MCF 10A (cell line): ENCODE measurements at regions of chr5 and their contacts with region 1.

Region 1: GRCh38 chr5:66864331-66864840 is 268.2 kb downstream of the MAST4 start:
- DNase-seq: peak; percentile 55
- H3K4me3 Mint-ChIP-seq: no peak overlapping the region
- H3K27ac Mint-ChIP-seq: no peak overlapping the region
- H3K4me1 Mint-ChIP-seq: peaks cover 5% of the 10 kb centered on the region
- H3K27me3 Mint-ChIP-seq: no peaks in the 10 kb centered on the region
- CTCF ChIP-seq: peak; percentile 33

Region 2: GRCh38 chr5:66807743-66808142 is 56.6 kb before region 1 on chr5:
- CTCF ChIA-PET with region 1: interaction called, 47 read pairs
- POLR2A ChIA-PET with region 1: no interaction called
- intact Hi-C with region 1: loop called (anchors 2 kb)
- DNase-seq: peak; percentile 84
- H3K4me3 Mint-ChIP-seq: no peak overlapping the region
- H3K27ac Mint-ChIP-seq: no peak overlapping the region
- H3K4me1 Mint-ChIP-seq: peaks cover 8% of the 10 kb centered on the region
- H3K27me3 Mint-ChIP-seq: peaks cover 42% of the 10 kb centered on the region
- CTCF ChIP-seq: peak; percentile 56

Region 3: DNA sequence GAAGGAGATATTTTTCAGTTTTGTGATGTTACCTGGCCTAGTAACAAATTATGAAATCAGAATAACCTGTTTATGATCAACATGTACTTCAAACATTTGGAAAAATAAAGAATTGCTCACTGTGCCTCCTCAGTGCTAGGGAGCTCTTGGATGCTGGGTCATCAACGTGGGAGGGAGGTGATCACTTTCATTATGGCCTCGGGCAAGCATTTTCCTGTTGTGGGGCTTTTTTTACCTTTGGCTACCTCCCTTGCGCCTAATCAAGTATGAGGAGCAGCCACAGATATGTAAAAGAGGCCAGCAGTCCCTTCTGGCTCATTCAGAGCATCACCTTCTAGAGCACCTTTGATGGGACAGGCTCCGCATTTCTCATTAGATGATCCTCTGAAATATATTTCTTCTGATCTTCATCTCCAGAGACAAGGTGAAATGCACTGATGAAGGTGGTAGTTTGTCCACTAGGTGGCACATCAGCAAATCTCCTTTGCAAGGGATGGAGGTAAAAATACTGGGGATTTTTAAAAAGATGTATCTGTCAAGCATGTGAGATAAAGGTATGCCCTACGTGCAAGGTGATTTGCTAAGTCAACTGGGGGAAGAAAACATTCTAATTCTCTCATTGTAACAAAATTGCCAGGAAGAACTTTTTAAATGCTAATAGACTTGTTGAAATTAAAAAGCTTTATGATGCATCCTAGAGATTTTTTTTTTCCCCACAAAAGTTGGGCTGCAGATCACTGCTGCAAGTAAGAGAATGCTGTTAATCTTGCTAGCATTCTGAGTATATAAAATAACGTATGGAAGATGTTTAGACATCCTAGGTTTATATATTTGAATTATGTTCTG is 50.0 kb before region 1 on chr5:
- CTCF ChIA-PET with region 1: interaction called, 47 read pairs
- POLR2A ChIA-PET with region 1: interaction called, 3 read pairs
- intact Hi-C with region 1: loop called (anchors 1 kb)
- DNase-seq: peak; percentile 69
- H3K4me3 Mint-ChIP-seq: no peak overlapping the region
- H3K27ac Mint-ChIP-seq: no peak overlapping the region
- H3K4me1 Mint-ChIP-seq: peaks cover 6% of the 10 kb centered on the region
- H3K27me3 Mint-ChIP-seq: no peaks in the 10 kb centered on the region
- CTCF ChIP-seq: peak; percentile 41

Region 4: DNA sequence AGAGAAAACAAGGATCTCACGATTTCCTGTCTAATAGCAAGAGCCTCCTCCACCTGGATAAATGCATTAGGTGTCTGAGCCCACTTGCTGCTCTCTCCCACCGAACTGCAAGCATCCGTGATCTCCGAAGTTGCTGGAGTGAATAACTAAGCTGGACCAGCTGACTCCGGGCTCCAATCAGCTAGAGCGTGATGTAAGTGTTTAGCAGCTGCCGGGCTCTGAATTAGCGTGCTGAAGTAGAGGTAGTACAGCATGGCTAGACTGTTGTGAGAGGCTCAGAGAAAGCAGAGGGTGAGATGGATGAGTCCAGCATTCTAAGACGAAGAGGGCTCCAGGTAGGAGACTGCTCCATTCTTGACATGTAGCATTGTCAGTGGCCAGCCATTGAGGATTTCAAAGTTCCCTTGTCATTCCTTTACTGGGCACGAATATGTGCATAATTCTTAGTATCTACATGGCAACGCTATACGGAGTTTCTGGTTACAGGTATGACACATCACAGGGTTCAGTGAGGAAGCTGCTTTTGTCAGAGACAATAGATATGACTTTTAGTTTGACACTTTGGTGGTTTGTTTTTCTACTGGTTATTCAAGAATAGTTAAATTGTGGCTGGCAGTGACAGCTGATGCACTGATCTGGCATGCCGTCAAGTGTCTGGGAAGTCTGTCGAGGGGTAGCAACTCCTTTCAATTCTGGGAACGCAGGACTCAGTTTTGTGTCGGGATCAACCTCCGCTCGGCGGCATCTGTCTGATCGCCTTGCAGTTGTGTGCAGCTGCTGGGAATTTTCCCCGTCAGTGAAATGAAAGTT is 35.6 kb before region 1 on chr5:
- CTCF ChIA-PET with region 1: interaction called, 7 read pairs
- POLR2A ChIA-PET with region 1: interaction called, 10 read pairs
- intact Hi-C with region 1: no loop called
- DNase-seq: peak; percentile 67
- H3K4me3 Mint-ChIP-seq: peak overlapping the region; percentile 85
- H3K27ac Mint-ChIP-seq: peak overlapping the region; percentile 90
- H3K4me1 Mint-ChIP-seq: peaks cover 21% of the 10 kb centered on the region
- H3K27me3 Mint-ChIP-seq: no peaks in the 10 kb centered on the region
- CTCF ChIP-seq: no peak

Region 5: GRCh38 chr5:66849803-66850202 is 14.6 kb before region 1 on chr5:
- CTCF ChIA-PET with region 1: interaction called, 10 read pairs
- POLR2A ChIA-PET with region 1: interaction called, 8 read pairs
- intact Hi-C with region 1: no loop called
- DNase-seq: peak; percentile 78
- H3K4me3 Mint-ChIP-seq: peak overlapping the region; percentile 53
- H3K27ac Mint-ChIP-seq: peak overlapping the region; percentile 24
- H3K4me1 Mint-ChIP-seq: peaks cover 16% of the 10 kb centered on the region
- H3K27me3 Mint-ChIP-seq: no peaks in the 10 kb centered on the region
- CTCF ChIP-seq: no peak

Region 6: DNA sequence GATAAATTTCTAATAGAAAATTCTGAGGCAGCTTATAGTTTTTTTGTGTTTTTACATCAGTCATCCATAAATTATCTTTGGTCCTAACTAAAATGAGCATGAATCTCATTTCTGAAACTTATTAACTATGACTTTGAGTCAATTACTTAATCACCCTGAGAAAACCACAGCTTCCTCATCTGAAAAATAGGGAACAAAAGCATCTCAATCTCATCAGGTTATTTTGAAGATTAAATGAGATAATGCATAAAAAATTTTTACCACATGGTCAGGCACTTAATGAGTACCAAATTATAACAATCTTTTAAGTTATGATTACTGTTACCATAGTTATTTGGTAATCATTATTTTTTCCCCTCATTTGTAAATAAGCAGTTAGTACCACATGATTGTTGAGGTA is 10.9 kb after region 1 on chr5:
- CTCF ChIA-PET with region 1: interaction called, 20 read pairs
- POLR2A ChIA-PET with region 1: interaction called, 10 read pairs
- intact Hi-C with region 1: no loop called
- DNase-seq: no peak
- H3K4me3 Mint-ChIP-seq: no peak overlapping the region
- H3K27ac Mint-ChIP-seq: no peak overlapping the region
- H3K4me1 Mint-ChIP-seq: peaks cover 6% of the 10 kb centered on the region
- H3K27me3 Mint-ChIP-seq: no peaks in the 10 kb centered on the region
- CTCF ChIP-seq: no peak

Region 7: DNA sequence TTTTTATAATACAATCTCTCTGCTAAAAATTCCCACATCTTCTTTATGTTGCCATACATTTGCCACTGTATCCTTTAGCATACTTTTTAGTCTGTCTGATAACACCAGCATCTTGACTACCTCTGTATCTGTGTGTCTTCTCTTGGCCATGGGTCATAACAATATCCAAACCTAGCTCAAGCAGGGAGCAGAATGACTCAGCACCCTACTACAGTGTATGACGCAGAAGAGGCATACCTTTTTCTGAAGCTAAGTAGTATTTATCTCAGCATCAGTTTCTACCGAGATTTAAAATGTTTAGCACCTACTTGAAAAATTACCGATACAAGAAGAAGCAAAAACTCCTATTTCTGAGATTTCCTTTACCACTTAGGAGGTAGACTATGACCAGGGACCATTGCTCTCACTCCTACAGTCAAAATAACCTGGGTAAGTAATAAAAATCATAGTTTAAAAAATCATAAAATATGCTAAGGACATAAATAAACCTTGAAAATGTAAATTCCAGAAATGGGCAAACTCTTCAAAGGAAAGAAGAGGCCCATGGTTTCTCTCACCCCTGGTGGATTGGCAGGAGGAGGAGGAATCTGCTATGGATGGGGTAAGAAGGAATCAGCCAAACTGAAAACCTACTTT is 18.3 kb after region 1 on chr5:
- CTCF ChIA-PET with region 1: interaction called, 8 read pairs
- POLR2A ChIA-PET with region 1: interaction called, 10 read pairs
- intact Hi-C with region 1: no loop called
- DNase-seq: peak; percentile 88
- H3K4me3 Mint-ChIP-seq: peak overlapping the region; percentile 9
- H3K27ac Mint-ChIP-seq: peak overlapping the region; percentile 60
- H3K4me1 Mint-ChIP-seq: peaks cover 28% of the 10 kb centered on the region
- H3K27me3 Mint-ChIP-seq: no peaks in the 10 kb centered on the region
- CTCF ChIP-seq: no peak

Region 8: GRCh38 chr5:67465537-67466207 is 601.3 kb after region 1 on chr5:
- CTCF ChIA-PET with region 1: no interaction called
- POLR2A ChIA-PET with region 1: no interaction called
- intact Hi-C with region 1: no loop called
- DNase-seq: no peak
- H3K4me3 Mint-ChIP-seq: no peak overlapping the region
- H3K27ac Mint-ChIP-seq: no peak overlapping the region
- H3K4me1 Mint-ChIP-seq: peaks cover 5% of the 10 kb centered on the region
- H3K27me3 Mint-ChIP-seq: no peaks in the 10 kb centered on the region
- CTCF ChIP-seq: no peak